IMR-90 (cell line): ENCODE measurements at regions of chr18 and their contacts with region 1.

Region 1: DNA sequence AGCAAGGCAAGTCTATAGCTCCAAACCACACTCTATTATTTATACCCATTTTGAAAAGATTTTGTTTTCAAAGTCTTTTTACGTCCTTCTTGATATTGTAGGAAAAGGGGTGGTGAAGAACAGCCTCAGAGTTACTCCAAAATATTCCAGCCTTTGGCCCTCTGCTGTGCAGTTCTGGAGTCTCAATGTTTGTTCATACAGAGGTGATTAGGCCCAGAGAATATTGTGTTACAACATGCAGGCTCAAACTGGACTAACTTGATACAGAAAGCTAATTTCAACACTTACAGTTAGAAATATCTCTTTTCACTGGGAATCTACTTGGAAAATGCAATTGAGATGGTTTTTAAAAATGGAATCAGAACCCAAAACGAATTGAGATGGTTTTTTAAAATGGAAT is 40.4 kb upstream of the SLC25A52 start:
- DNase-seq: no peak
- ATAC-seq: no peak
- H3K4me3 ChIP-seq: no peak overlapping the region
- H3K27ac ChIP-seq: no peak overlapping the region
- H3K4me1 ChIP-seq: no peaks in the 10 kb centered on the region
- H3K27me3 ChIP-seq: no peaks in the 10 kb centered on the region
- CTCF ChIP-seq: no peak
- POLR2A ChIP-seq: no peak
- RAD21 ChIP-seq: no peak

Region 2: DNA sequence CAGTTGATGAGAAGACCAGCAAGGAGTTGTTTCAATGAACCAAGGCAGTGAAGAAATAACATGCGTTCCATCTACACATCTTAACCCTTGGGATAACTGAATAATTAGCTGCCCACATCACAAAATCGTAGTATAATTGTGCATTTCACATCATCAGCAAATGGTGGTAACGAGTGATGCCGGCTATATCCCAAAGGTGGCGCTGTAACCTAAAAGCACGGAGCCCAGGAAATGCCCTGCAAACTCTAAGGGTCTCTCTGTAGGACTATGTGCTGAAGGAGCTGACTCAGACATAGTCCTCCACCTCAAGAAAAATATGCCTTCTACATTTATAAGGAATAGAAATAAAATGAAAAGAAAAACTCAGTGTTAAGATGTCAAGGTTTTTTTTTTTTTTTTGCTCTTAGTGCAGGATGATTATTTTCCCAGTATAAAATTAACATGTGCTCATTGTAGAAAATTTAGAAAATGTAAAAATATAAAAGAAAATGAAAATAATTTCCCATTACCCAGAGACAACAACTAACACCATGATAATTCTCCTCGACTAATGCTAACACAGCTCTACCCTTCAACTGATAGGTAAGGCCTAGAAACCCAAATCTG is 376.6 kb before region 1 on chr18:
- CTCF ChIA-PET with region 1: no interaction called
- POLR2A ChIA-PET with region 1: no interaction called
- dilution Hi-C with region 1: no loop called
- in situ Hi-C with region 1: no loop called
- intact Hi-C with region 1: no loop called
- DNase-seq: peak; percentile 20
- ATAC-seq: peak; percentile 51; the same call in 1 of the 2 replicates
- H3K4me3 ChIP-seq: no peak overlapping the region
- H3K27ac ChIP-seq: no peak overlapping the region
- H3K4me1 ChIP-seq: no peaks in the 10 kb centered on the region
- H3K27me3 ChIP-seq: no peaks in the 10 kb centered on the region
- CTCF ChIP-seq: peak; percentile 43
- POLR2A ChIP-seq: no peak
- RAD21 ChIP-seq: peak; percentile 57

Region 3: GRCh38 chr18:31998880-31999412 is 197.9 kb after region 1 on chr18:
- CTCF ChIA-PET with region 1: no interaction called
- POLR2A ChIA-PET with region 1: interaction called, 12 read pairs
- dilution Hi-C with region 1: no loop called
- in situ Hi-C with region 1: no loop called
- intact Hi-C with region 1: no loop called
- DNase-seq: no peak
- ATAC-seq: no peak
- H3K4me3 ChIP-seq: no peak overlapping the region
- H3K27ac ChIP-seq: no peak overlapping the region
- H3K4me1 ChIP-seq: no peaks in the 10 kb centered on the region
- H3K27me3 ChIP-seq: 0 out of 2 replicates have a peak, but pooled peaks cover 2% of the 10 kb centered on the region
- CTCF ChIP-seq: no peak
- POLR2A ChIP-seq: no peak
- RAD21 ChIP-seq: no peak